ENCODE measurements at regions of chrX and their contacts with region 1.

Region 1: DNA sequence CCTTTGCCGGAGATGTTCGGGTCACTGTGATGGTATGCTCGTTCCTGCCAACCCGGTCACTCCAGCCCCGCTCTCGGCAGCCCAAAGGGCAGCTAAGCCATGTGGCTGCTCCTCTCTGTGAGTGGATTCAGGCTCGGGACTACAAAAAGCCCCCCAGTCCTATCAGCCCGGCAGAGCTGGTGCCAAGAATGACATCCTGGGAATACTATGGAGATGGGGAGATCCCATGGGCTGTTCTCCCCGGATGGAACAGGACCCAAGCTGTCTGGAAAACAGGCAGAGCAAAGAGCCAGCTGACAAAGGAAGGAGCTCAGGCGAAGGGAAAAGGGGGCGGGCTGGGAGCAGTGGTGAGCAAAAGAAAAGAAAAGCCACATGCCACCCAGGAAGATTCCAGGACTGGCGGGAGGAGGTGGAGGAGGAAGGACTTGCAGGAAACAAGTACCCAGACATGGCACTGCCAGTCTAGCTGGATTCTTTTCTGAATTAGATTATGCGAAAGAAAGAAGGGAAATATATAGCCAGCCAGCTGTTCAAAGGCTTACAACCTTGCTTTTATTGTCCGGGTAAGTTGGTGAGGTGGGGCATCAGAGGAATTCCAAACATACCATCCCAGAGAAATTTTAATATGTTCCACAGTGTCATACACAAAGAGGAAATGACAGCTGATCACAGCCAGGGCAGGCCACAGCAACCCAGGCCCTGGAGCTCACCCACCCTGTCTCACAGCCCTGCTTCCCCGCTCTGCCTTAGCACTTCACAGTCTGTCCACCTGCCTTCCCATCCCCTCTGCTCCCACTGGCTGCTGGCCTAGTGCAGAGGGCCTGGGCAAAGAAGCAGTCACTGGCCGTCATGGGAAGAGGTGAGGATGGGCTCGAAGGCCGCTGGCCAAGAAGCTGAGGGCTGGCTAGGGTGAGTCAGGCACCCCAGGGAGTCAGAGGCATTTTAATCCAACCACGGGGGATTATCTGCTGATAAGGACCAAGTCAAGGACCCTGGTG is 3.4 kb downstream of the NDP start:
- DNase-seq: no peak
- ATAC-seq: no peak
- H3K4me3 ChIP-seq: no peak overlapping the region
- H3K27ac ChIP-seq: no peak overlapping the region
- H3K4me1 ChIP-seq: no peaks in the 10 kb centered on the region
- H3K27me3 ChIP-seq: peaks cover 0 to 18% (median 0%) of the 10 kb centered on the region in 3 donors
- CTCF ChIP-seq: no peak
- POLR2A ChIP-seq: no peak

Region 2: DNA sequence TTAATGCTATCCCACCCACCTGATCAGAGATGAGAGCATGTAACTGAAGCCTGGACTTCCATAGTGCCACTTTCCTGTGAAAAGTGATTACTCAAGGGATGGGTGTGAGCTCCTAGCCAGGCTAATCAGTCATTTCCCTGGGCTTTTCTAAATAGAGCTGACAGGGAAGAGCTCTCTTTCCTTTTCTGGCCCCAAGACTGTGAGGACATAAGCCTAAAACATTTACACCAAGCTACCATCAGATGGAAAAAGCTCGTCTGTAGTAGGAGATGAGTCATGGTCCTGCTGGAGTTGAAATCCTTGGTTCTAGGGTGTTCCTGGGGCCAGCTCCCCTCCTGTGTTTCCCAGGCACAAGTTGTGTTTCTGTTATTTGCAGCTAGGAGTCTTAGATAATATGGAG is 55.8 kb after region 1 on chrX:
- in situ Hi-C with region 1: loop called in 1 of 4 experiments (anchors 10 kb)
- intact Hi-C with region 1: no loop called
- DNase-seq: no peak
- ATAC-seq: no peak
- H3K4me3 ChIP-seq: no peak overlapping the region
- H3K27ac ChIP-seq: no peak overlapping the region
- H3K4me1 ChIP-seq: no peaks in the 10 kb centered on the region
- H3K27me3 ChIP-seq: no peaks in the 10 kb centered on the region
- CTCF ChIP-seq: no peak
- POLR2A ChIP-seq: no peak

Measured in gastrocnemius medialis (tissue), 4 donors.